ENCODE measurements at regions of chrX and their contacts with region 1.

Region 1: GRCh38 chrX:117996918-117997480 is 119.6 kb downstream of the KLHL13 start:
- DNase-seq: no peak

Region 2: GRCh38 chrX:118254611-118255010 is 257.6 kb after region 1 on chrX:
- intact Hi-C with region 1: loop called (anchors 10 kb)
- DNase-seq: peak in 5 of 10 donors; percentile 11 to 47 (median 26)